Breast epithelium (tissue), 4 donors: ENCODE measurements at regions of chr9 and their contacts with region 1.

Region 1: DNA sequence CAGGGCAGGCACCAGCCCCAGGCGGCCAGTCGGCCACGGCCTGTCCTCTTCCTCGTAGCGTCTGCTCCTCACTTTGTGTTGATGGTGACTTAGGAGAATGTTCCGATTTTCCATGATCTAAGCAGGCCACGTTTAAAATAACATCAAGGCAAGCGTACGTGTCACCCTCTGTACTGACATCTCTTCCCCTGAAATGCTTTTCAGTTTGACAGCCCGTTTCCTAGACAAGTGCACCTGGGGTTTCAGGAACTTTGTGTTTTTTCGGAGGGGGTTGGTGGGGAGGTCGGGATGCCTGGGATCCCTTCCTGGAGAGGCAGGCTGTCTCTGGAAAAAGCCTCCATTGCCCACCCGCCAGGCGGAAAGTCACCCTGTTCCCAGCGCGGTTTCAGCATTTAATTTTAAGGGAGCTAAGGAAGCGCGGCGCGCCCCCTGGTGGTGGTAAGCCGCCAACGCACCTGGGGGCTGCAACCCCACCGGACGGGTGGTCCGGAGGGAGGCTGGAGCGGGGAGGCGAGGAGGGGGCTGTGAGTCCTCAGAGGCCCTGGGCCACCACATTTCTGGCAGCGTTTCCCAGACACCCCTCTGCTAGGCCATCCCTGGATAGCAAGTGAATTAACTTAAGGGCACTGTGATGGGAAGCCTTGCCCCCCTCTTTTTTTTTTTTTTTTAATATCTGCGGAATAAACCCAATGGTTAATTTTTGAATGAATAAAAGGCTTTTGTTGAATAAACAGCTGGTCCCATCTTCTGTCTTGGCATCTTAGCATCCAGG is 29.5 kb upstream of the HMCN2 start:
- DNase-seq: peak; percentile 39 to 62
- H3K4me3 ChIP-seq: peak overlapping the region in 1 of 3 donors; percentile 7
- H3K27ac ChIP-seq: no peak overlapping the region
- H3K4me1 ChIP-seq: no peaks in the 10 kb centered on the region
- H3K27me3 ChIP-seq: no peaks in the 10 kb centered on the region
- CTCF ChIP-seq: peak; percentile 97 to 99 (median 98)
- POLR2A ChIP-seq: no peak

Region 2: DNA sequence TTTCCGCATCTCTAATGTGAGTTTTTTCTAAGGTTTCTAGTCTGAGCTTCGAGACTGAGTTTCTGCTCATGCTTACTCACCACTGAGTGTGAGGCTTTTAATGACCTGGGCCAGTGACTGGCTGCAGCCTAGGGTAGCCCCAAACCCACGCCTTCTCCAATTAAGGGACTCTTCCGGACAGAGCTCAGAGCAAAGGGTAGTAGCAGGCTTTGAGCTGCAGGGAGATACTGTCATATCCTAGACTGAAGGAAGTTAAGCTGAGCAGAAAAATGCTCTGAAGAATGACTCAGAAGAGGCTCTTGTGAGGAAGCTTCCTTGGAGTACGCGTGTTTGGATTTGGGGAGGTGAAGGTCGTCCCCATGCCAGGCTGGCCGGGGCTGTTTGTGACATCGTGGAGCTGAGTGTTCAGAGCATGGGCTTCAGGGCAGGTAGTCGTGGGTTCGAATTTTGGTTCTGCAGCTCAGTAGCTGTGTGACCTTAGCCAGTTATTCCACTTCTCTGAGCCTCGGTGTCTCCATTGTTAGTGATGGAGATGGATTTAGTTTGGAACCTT is 397.3 kb before region 1 on chr9:
- intact Hi-C with region 1: no loop called
- DNase-seq: no peak
- H3K4me3 ChIP-seq: no peak overlapping the region
- H3K27ac ChIP-seq: peak overlapping the region in 1 of 2 donors; percentile 20
- H3K4me1 ChIP-seq: peaks cover 0 to 12% of the 10 kb centered on the region in 2 donors
- H3K27me3 ChIP-seq: no peaks in the 10 kb centered on the region
- CTCF ChIP-seq: no peak
- POLR2A ChIP-seq: no peak

Region 3: GRCh38 chr9:130107234-130107861 is 128.7 kb before region 1 on chr9:
- intact Hi-C with region 1: loop called (anchors 5 kb)
- DNase-seq: peak; percentile 67 to 79
- H3K4me3 ChIP-seq: no peak overlapping the region
- H3K27ac ChIP-seq: peak overlapping the region in 1 of 2 donors; percentile 64
- H3K4me1 ChIP-seq: no peaks in the 10 kb centered on the region
- H3K27me3 ChIP-seq: no peaks in the 10 kb centered on the region
- CTCF ChIP-seq: peak; percentile 76 to 78 (median 77)
- POLR2A ChIP-seq: no peak